Esophagus squamous epithelium (tissue), 5 donors: ENCODE measurements at regions of chr4 and their contacts with region 1.

Region 1: GRCh38 chr4:99816545-99817308 is at the start of gene DAPP1:
- DNase-seq: peak; percentile 63
- H3K4me3 ChIP-seq: peak within 1 kb of the TSS; percentile 26 to 63 (median 52)
- H3K27ac ChIP-seq: peak within 1 kb of the TSS; percentile 81 to 93 (median 90)
- H3K4me1 ChIP-seq: peaks cover 5 to 63% (median 20%) of the 10 kb centered on the region in 3 donors
- H3K27me3 ChIP-seq: no peaks in the 10 kb centered on the region
- CTCF ChIP-seq: no peak
- POLR2A ChIP-seq: peak in 3 of 4 donors; percentile 36 to 90 (median 86)
- total RNA-seq, gene DAPP1: 34.9 to 73.2 (median 40.7) TPM

Region 2: GRCh38 chr4:99563310-99564186 is 253.2 kb before region 1 on chr4 and contains the start of gene TRMT10A:
- intact Hi-C with region 1: loop called (anchors 5 kb)
- DNase-seq: peak; percentile 84
- H3K4me3 ChIP-seq: peak within 1 kb of the TSS; percentile 55 to 85 (median 73)
- H3K27ac ChIP-seq: peak within 1 kb of the TSS; percentile 94 to 98 (median 96)
- H3K4me1 ChIP-seq: peaks cover 0 to 12% (median 3%) of the 10 kb centered on the region in 3 donors
- H3K27me3 ChIP-seq: peaks cover 0 to under 1% (median 0%) of the 10 kb centered on the region in 4 donors
- CTCF ChIP-seq: peak in 3 of 6 experiments; percentile 2 to 30 (median 22)
- POLR2A ChIP-seq: peak in 2 of 4 donors; percentile 18 to 68
- total RNA-seq, gene TRMT10A: 2.7 to 12.2 (median 6.3) TPM

Region 3: GRCh38 chr4:99875072-99875471 is 58.3 kb after region 1 on chr4:
- intact Hi-C with region 1: loop called (anchors 10 kb)
- DNase-seq: no peak
- H3K4me3 ChIP-seq: no peak overlapping the region
- H3K27ac ChIP-seq: no peak overlapping the region
- H3K4me1 ChIP-seq: peaks cover 0 to 27% (median 0%) of the 10 kb centered on the region in 3 donors
- H3K27me3 ChIP-seq: no peaks in the 10 kb centered on the region
- CTCF ChIP-seq: no peak
- POLR2A ChIP-seq: no peak

Region 4: DNA sequence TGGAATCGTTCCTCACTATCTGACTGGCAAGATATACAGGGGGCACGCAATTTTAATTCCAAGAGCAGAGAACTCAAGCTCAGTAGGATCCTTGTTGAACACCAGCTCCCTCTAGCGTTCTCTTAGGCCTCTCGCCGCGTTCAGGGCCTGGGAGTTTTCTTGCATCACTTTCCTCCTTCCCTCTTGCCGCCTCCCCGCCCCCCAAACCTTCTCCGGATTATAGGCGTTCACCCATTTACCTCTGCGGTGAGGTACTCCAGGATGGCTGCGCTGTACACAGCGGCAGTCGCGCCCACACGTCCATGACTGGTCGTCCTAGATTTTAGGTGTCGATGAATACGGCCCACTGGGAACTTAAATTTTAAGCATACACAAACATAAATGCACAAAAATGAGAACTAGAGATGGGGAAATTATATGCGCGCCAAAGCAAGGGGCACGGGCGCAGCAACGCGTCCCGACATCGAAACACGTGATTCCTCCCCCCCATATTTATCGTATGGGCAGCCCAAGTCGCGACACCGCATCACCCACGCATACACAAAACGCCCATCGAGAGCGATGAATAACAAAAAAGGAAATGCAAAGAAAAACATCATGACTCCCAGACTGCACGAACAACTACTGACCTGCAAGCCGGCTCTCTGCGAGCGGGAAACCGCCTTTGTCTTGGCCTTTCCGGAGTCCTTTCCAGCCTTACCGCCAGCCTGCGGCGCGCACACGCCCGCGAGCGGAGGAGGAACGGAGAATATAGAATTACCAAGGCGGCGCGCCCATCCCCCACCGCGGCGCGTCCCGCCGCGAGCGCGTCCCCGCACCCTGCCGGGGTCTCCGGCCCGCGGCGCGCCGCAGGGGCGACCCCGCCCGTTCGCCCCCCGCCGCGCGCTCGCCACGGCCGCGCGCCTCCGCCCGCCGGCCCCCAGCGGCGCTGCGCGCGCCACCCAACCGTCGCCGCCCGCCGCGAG is 132.6 kb after region 1 on chr4:
- intact Hi-C with region 1: loop called (anchors 10 kb)
- DNase-seq: peak; percentile 68
- H3K4me3 ChIP-seq: peak overlapping the region; percentile 59 to 94 (median 82)
- H3K27ac ChIP-seq: peak overlapping the region; percentile 88 to 98 (median 98)
- H3K4me1 ChIP-seq: peaks cover 16 to 47% (median 23%) of the 10 kb centered on the region in 3 donors
- H3K27me3 ChIP-seq: no peaks in the 10 kb centered on the region
- CTCF ChIP-seq: peak; percentile 84 to 92 (median 88)
- POLR2A ChIP-seq: peak in 1 of 4 donors; percentile 48